Endothelial cell of umbilical vein (primary cell): ENCODE measurements at regions of chr10 and their contacts with region 1.

Region 1: DNA sequence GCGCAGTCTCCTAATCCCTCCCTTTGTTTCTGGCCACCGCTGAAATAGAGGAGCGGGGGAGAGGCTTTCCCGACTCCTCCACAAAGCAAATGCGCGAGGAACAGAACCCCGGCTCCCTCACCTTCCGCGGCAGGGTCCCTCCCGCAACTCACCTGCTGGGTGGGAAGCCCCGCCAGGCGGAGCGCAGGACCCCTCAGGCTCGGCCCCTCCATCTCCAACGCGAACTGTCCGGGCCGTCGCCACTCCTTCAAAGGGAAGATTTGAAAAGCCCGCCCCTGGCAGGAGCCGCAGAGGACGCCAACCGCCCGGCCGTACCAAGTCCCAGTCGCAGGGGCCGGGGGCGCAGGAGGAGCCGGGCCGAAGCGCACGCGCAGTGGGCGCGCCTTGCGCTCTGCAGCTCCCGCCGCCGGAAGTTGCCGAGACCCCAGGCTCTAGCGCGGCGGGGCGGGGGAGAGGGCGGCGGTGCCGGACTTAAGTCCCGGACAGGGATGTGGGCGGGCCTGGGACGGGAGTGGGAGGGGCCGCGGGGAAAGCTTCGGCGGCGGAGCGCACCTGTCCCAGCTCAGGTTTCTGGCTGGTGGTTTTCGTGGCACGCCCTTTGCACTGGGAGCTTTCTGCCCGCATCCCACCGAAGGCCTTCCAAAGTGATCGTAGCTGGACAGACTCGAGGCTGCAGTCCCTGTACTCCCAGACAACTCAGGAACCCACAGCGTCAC is at the start of gene RTKN2:
- DNase-seq: peak; percentile 85
- H3K4me3 ChIP-seq: peak within 1 kb of the TSS; percentile 53 to 73 (median 72)
- H3K27ac ChIP-seq: no peak within 1 kb of the TSS
- H3K4me1 ChIP-seq: peaks cover 11% of the 10 kb centered on the region
- H3K27me3 ChIP-seq: peaks cover 0 to 2% of the 10 kb centered on the region in 2 experiments
- CTCF ChIP-seq: no peak
- POLR2A ChIP-seq: no peak
- total RNA-seq, gene RTKN2: 4.8 and 5.5 TPM in 2 replicates

Region 2: GRCh38 chr10:62244780-62245467 is 23.6 kb before region 1 on chr10:
- CTCF ChIA-PET with region 1: interaction called, 17 read pairs
- POLR2A ChIA-PET with region 1: no interaction called
- dilution Hi-C with region 1: no loop called
- intact Hi-C with region 1: no loop called
- DNase-seq: peak; percentile 86
- H3K4me3 ChIP-seq: no peak overlapping the region
- H3K27ac ChIP-seq: no peak overlapping the region
- H3K4me1 ChIP-seq: peaks cover 17% of the 10 kb centered on the region
- H3K27me3 ChIP-seq: no peaks in the 10 kb centered on the region
- CTCF ChIP-seq: peak; percentile 63 to 71
- POLR2A ChIP-seq: no peak

Region 3: DNA sequence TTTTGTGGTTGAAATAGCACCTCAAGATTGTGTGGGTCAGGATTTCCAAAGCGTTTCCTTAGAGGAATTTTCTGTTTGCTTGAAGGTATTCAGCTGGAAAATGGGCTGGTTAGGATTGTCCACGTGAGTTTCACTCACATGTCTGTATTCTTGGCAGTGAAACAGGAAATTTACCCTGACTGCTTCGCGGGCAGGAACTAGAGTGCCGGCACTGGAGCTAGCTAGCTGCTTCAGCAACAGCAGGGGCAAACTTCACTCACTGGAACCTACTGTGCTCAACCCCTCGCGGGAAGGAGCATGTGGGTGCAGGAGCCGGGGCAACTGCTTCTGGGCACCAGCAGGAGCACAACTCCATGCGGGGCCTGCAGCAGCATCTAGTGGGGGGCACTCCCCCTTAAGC is 38.1 kb after region 1 on chr10:
- CTCF ChIA-PET with region 1: no interaction called
- POLR2A ChIA-PET with region 1: no interaction called
- dilution Hi-C with region 1: no loop called
- intact Hi-C with region 1: no loop called
- DNase-seq: no peak
- H3K4me3 ChIP-seq: no peak overlapping the region
- H3K27ac ChIP-seq: no peak overlapping the region
- H3K4me1 ChIP-seq: no peaks in the 10 kb centered on the region
- H3K27me3 ChIP-seq: peaks cover 0 to 3% of the 10 kb centered on the region in 2 experiments
- CTCF ChIP-seq: no peak
- POLR2A ChIP-seq: no peak

Region 4: GRCh38 chr10:62373995-62374861 is 105.7 kb after region 1 on chr10 and contains the start of gene ZNF365:
- CTCF ChIA-PET with region 1: interaction called, 4 read pairs
- POLR2A ChIA-PET with region 1: no interaction called
- dilution Hi-C with region 1: no loop called
- intact Hi-C with region 1: loop called (anchors 2 kb)
- DNase-seq: no peak
- H3K4me3 ChIP-seq: peak within 1 kb of the TSS; percentile 39 to 52 (median 51)
- H3K27ac ChIP-seq: peak within 1 kb of the TSS; percentile 5
- H3K4me1 ChIP-seq: peaks cover 16% of the 10 kb centered on the region
- H3K27me3 ChIP-seq: no peaks in the 10 kb centered on the region
- CTCF ChIP-seq: no peak
- POLR2A ChIP-seq: no peak
- total RNA-seq, gene ZNF365: 2.9 and 5.5 TPM in 2 replicates

Region 5: GRCh38 chr10:62414359-62414758 is 145.8 kb after region 1 on chr10:
- CTCF ChIA-PET with region 1: interaction called, 28 read pairs
- POLR2A ChIA-PET with region 1: no interaction called
- dilution Hi-C with region 1: no loop called
- intact Hi-C with region 1: no loop called
- DNase-seq: no peak
- H3K4me3 ChIP-seq: no peak overlapping the region
- H3K27ac ChIP-seq: no peak overlapping the region
- H3K4me1 ChIP-seq: no peaks in the 10 kb centered on the region
- H3K27me3 ChIP-seq: no peaks in the 10 kb centered on the region
- CTCF ChIP-seq: peak in 1 of 2 donors; percentile 11
- POLR2A ChIP-seq: no peak

Region 6: GRCh38 chr10:62437696-62438095 is 169.1 kb after region 1 on chr10:
- CTCF ChIA-PET with region 1: interaction called, 11 read pairs
- POLR2A ChIA-PET with region 1: no interaction called
- dilution Hi-C with region 1: no loop called
- intact Hi-C with region 1: no loop called
- DNase-seq: peak; percentile 73
- H3K4me3 ChIP-seq: no peak overlapping the region
- H3K27ac ChIP-seq: no peak overlapping the region
- H3K4me1 ChIP-seq: peaks cover 14% of the 10 kb centered on the region
- H3K27me3 ChIP-seq: no peaks in the 10 kb centered on the region
- CTCF ChIP-seq: peak; percentile 54 to 58
- POLR2A ChIP-seq: no peak

Region 7: GRCh38 chr10:63083904-63084689 is 815.5 kb after region 1 on chr10:
- CTCF ChIA-PET with region 1: interaction called, 14 read pairs
- POLR2A ChIA-PET with region 1: no interaction called
- dilution Hi-C with region 1: no loop called
- intact Hi-C with region 1: no loop called
- DNase-seq: peak; percentile 67
- H3K4me3 ChIP-seq: no peak overlapping the region
- H3K27ac ChIP-seq: no peak overlapping the region
- H3K4me1 ChIP-seq: no peaks in the 10 kb centered on the region
- H3K27me3 ChIP-seq: no peaks in the 10 kb centered on the region
- CTCF ChIP-seq: peak; percentile 31 to 46
- POLR2A ChIP-seq: no peak